ENCODE measurements at regions of chr19 and their contacts with region 1.

Region 1: GRCh38 chr19:48795055-48795684 is 15.7 kb downstream of the BCAT2 start:
- DNase-seq: peak; percentile 94
- ATAC-seq: peak; percentile 96
- H3K4me3 Mint-ChIP-seq: peak overlapping the region; percentile 96
- H3K27ac Mint-ChIP-seq: peak overlapping the region; percentile 98
- H3K4me1 Mint-ChIP-seq: peaks cover 18% of the 10 kb centered on the region
- H3K27me3 Mint-ChIP-seq: no peaks in the 10 kb centered on the region; the same call in none of the 2 replicates
- CTCF ChIP-seq: peak; percentile 92

Region 2: DNA sequence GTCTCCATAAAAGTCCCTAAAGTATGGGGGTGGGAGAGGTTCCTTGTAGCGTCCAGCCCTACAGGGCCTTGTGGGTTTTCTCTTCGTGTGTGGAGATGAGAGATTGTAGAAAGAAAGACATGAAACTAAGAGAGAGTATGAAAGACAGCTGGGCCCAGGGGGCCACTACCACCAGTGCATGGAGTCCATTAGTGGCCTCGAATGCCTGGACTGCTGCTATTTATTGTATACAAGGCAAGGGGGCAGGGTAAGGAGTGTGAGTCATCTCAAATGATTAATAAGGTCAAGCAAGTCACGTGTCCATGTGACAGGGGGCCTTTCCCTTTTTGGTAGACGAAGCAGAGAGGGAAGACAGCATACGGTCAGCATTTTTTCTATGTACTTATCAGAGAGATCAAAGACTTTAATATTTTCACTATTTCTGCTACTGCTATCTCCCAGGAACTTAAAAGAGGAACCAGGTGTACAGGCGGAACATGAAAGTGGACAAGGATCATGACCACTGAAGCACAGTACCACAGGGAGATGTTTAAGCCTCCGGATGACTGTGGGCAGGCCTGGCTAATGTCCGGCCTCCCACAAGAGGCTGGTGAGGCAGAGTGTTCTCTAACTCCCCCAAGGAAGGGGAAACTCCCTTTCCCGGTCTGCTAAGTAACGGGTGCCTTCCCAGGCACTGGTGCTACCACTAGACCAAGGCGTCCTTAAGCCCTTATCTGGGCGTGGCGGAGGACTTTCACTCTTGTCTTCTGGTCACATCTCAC is 14.4 kb before region 1 on chr19:
- CTCF ChIA-PET with region 1: interaction called, 12 read pairs
- POLR2A ChIA-PET with region 1: no interaction called
- DNase-seq: no peak
- ATAC-seq: no peak
- H3K4me3 Mint-ChIP-seq: no peak overlapping the region
- H3K27ac Mint-ChIP-seq: no peak overlapping the region
- H3K4me1 Mint-ChIP-seq: peaks cover 2% of the 10 kb centered on the region; the same call in 1 of the 2 replicates
- H3K27me3 Mint-ChIP-seq: peaks cover 8% of the 10 kb centered on the region
- CTCF ChIP-seq: no peak

Region 3: GRCh38 chr19:48806518-48806817 is 11.3 kb after region 1 on chr19:
- CTCF ChIA-PET with region 1: interaction called, 132 read pairs
- POLR2A ChIA-PET with region 1: interaction called, 11 read pairs
- DNase-seq: peak; percentile 76
- ATAC-seq: no peak
- H3K4me3 Mint-ChIP-seq: peak overlapping the region; percentile 36; the same call in 1 of the 2 replicates
- H3K27ac Mint-ChIP-seq: peak overlapping the region; percentile 79; the same call in 1 of the 2 replicates
- H3K4me1 Mint-ChIP-seq: peaks cover 32% of the 10 kb centered on the region
- H3K27me3 Mint-ChIP-seq: peaks cover 17% of the 10 kb centered on the region
- CTCF ChIP-seq: no peak

Region 4: GRCh38 chr19:48812094-48812929 is 17.1 kb after region 1 on chr19:
- CTCF ChIA-PET with region 1: interaction called, 132 read pairs
- POLR2A ChIA-PET with region 1: interaction called, 7 read pairs
- DNase-seq: peak; percentile 92
- ATAC-seq: peak; percentile 73
- H3K4me3 Mint-ChIP-seq: peak overlapping the region; percentile 69
- H3K27ac Mint-ChIP-seq: peak overlapping the region; percentile 98
- H3K4me1 Mint-ChIP-seq: peaks cover 36% of the 10 kb centered on the region
- H3K27me3 Mint-ChIP-seq: peaks cover 30% of the 10 kb centered on the region
- CTCF ChIP-seq: no peak

Region 5: GRCh38 chr19:48826606-48827020 is 31.4 kb after region 1 on chr19:
- CTCF ChIA-PET with region 1: interaction called, 38 read pairs
- POLR2A ChIA-PET with region 1: interaction called, 3 read pairs
- DNase-seq: peak; percentile 75
- ATAC-seq: peak; percentile 75
- H3K4me3 Mint-ChIP-seq: no peak overlapping the region
- H3K27ac Mint-ChIP-seq: no peak overlapping the region
- H3K4me1 Mint-ChIP-seq: no peaks in the 10 kb centered on the region
- H3K27me3 Mint-ChIP-seq: no peaks in the 10 kb centered on the region; the same call in 1 of the 2 replicates
- CTCF ChIP-seq: peak; percentile 43

Region 6: GRCh38 chr19:48835734-48836088 is 40.5 kb after region 1 on chr19:
- CTCF ChIA-PET with region 1: interaction called, 76 read pairs
- POLR2A ChIA-PET with region 1: no interaction called
- DNase-seq: peak; percentile 98
- ATAC-seq: peak; percentile 68
- H3K4me3 Mint-ChIP-seq: peak overlapping the region; percentile 94
- H3K27ac Mint-ChIP-seq: peak overlapping the region; percentile 98
- H3K4me1 Mint-ChIP-seq: peaks cover 19% of the 10 kb centered on the region
- H3K27me3 Mint-ChIP-seq: no peaks in the 10 kb centered on the region
- CTCF ChIP-seq: peak; percentile 84

Region 7: DNA sequence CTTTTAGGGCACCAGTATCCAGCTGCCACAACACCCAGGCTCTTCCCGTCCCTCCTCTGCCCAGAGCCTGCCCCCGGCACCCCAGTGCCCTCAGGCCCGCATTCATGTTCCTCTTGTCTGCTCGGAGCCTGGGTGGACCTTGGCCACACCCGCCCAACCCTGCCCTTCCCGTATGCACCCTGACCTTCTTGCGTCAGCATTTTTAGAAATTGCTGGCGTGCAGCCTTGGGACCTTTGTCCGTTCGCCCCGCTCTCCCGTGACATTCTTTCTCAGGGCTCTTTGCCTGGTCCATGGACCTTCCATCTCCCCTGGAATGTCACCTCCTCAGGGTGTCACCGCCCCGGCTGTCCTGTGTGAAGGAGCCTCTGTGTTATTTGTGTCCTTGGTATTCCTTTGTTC is 112.5 kb after region 1 on chr19:
- CTCF ChIA-PET with region 1: no interaction called
- POLR2A ChIA-PET with region 1: no interaction called
- DNase-seq: no peak
- ATAC-seq: no peak
- H3K4me3 Mint-ChIP-seq: no peak overlapping the region
- H3K27ac Mint-ChIP-seq: no peak overlapping the region
- H3K4me1 Mint-ChIP-seq: no peaks in the 10 kb centered on the region
- H3K27me3 Mint-ChIP-seq: no peaks in the 10 kb centered on the region
- CTCF ChIP-seq: no peak

Measured in WTC11 (cell line).